H1 (cell line): ENCODE measurements at regions of chr15 and their contacts with region 1.

Region 1: DNA sequence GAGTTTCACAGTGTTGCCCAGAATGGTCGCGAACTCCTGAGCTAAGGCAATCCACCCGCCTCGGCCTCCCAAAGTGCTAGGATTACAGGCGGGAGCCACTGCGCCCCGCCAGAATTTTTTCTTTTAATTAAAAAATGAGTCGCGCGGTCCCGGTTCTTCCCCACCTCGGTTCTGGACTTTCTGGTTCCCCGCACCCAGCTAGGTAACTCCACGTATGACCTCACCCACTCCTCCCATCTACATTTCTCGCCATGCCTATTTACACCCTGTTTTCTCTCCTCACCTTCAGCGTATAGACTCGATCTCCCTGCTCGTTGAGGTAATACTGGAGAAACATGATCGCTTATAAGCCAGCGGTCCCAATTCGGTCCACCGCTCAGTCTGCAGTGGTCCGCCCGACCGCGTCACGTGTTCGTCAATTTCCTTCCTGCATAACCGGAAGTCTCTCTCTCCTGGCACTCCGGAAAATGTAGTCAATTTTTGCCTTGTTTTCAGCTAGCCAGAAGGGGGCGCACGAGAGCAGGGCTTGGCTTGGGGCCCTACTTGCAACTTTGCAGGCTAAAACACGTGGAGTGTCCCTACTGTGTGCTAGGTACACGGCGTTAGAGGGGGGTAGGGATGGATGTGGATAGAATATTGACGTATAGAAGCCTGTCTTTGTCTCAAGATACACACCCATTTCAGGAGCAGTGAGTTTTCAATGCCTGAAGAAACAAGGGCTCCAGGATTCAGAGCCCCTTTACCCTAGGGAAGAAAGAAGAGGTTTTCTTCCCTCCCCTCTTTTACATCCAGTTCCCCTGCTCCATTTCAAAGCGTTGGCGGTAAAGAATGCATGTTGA is at the starts of genes NOP10 and NUTM1:
- DNase-seq: peak; percentile 98 to 99
- H3K4me3 ChIP-seq: peak within 1 kb of the TSS; percentile 86 to 94 (median 92)
- H3K27ac ChIP-seq: peak within 1 kb of the TSS; percentile 88
- H3K4me1 ChIP-seq: peaks cover 4 to 11% (median 8%) of the 10 kb centered on the region in 4 experiments; a peak in 6 of 7 replicates
- H3K27me3 ChIP-seq: no peaks in the 10 kb centered on the region
- CTCF ChIP-seq: peak; percentile 77 to 99 (median 87)
- EP300 ChIP-seq: peak in 1 of 2 experiments; percentile 87; a peak in 1 of 3 replicates
- POLR2A ChIP-seq: peak; percentile 39 to 87
- RAD21 ChIP-seq: peak; percentile 80 to 84
- total RNA-seq, gene NOP10: 285 and 297 TPM in 2 replicates
- total RNA-seq, gene NUTM1: 0.60 and 0.61 TPM in 2 replicates

Region 2: GRCh38 chr15:33467816-33468163 is 875.2 kb before region 1 on chr15:
- CTCF ChIA-PET with region 1: no interaction called
- POLR2A ChIA-PET with region 1: no interaction called
- DNase-seq: no peak
- H3K4me3 ChIP-seq: no peak overlapping the region
- H3K27ac ChIP-seq: no peak overlapping the region
- H3K4me1 ChIP-seq: peaks cover 0 to 3% (median 2%) of the 10 kb centered on the region in 4 experiments; a peak in 2 of 7 replicates
- H3K27me3 ChIP-seq: peaks cover 0 to 7% (median 2%) of the 10 kb centered on the region in 4 experiments; a peak in 3 of 7 replicates
- CTCF ChIP-seq: no peak
- EP300 ChIP-seq: no peak
- POLR2A ChIP-seq: no peak
- RAD21 ChIP-seq: no peak

Region 3: DNA sequence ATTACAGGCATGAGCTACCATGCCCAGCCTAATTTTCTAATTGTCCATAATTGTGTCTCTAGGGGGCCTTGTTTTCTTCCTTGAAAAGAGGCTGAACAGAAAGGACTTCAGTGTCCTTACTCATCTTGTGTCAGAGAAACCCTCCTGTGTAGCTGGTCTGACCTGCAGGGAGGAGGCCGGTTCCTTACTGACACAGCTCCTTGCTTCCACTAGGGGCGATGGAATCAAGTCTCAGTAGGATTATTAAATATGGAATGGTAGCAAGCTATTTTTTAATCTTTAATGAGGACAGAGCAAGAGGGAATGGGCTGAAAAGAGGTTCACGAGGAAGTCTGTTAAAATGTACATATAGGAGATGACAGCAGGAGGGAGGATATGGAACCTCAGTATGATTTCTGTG is 15.4 kb after region 1 on chr15:
- CTCF ChIA-PET with region 1: interaction called, 34 read pairs
- POLR2A ChIA-PET with region 1: interaction called, 8 read pairs
- DNase-seq: no peak
- H3K4me3 ChIP-seq: no peak overlapping the region
- H3K27ac ChIP-seq: no peak overlapping the region
- H3K4me1 ChIP-seq: peaks cover 2 to 8% (median 3%) of the 10 kb centered on the region in 4 experiments; a peak in 5 of 7 replicates
- H3K27me3 ChIP-seq: no peaks in the 10 kb centered on the region
- CTCF ChIP-seq: peak; percentile 27 to 47 (median 33); a peak in 3 of 4 replicates
- EP300 ChIP-seq: no peak
- POLR2A ChIP-seq: no peak
- RAD21 ChIP-seq: peak; percentile 15 to 23; a peak in 1 of 4 replicates